Breast epithelium (tissue), 4 donors: ENCODE measurements at regions of chr6 and their contacts with region 1.

Region 1: DNA sequence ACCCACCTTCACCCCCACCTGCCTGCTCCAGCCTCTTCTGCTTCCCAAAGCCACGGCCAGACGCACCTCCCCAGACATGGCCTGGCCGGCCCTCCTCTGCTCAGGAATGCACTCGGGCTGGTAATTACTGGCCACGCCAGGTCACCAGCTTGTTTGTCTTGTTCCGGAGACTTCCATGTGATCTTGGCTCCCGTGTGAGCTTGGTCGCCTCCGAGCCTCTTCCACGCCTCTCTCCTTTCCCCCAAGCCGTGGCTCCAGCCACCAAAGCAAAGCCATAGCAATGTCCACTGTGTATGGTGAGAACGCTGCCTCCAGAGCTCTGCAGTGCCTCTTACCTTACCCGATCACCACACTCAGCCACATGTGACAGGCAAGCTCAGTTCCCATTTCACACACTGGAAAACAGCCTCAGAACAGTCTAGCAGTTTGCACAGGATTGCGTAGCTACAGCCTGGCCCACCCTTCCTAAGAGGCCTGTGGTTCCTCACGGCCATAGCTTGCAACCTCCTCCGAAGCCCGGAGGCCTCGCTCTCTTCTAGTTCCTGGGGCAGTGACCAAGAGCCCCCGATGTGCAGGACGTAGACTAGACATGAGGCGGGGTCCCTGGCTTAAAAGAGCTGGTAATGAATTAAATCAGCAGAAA is 48.1 kb upstream of the AFDN start:
- DNase-seq: peak; percentile 73 to 77
- H3K4me3 ChIP-seq: no peak overlapping the region
- H3K27ac ChIP-seq: peak overlapping the region in 1 of 2 donors; percentile 63
- H3K4me1 ChIP-seq: no peaks in the 10 kb centered on the region
- H3K27me3 ChIP-seq: no peaks in the 10 kb centered on the region
- CTCF ChIP-seq: no peak
- POLR2A ChIP-seq: no peak

Region 2: DNA sequence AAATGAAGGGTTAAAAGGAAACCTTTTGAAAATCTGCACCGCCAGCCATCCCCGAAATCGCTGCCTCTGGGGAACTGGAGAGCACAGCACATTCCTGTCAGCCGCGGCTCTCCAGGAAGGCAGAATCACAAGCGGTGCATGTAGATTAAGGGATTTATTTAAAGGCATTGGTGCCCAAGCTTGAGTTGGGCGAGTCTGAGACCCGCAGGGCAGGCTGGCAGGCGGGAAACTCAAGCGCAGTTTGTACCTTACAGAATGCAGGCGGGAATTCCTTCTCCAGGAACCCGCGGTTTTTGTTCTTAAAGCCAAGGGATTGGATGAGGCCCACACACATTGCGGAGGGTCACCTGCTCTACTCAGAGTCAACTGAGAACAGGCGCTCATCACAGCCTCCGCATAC is 631.6 kb before region 1 on chr6:
- intact Hi-C with region 1: loop called (anchors 5 kb)
- DNase-seq: no peak
- H3K4me3 ChIP-seq: no peak overlapping the region
- H3K27ac ChIP-seq: no peak overlapping the region
- H3K4me1 ChIP-seq: no peaks in the 10 kb centered on the region
- H3K27me3 ChIP-seq: peaks cover 0 to 26% of the 10 kb centered on the region in 2 donors
- CTCF ChIP-seq: no peak
- POLR2A ChIP-seq: no peak

Region 3: GRCh38 chr6:167742719-167743303 is 35.8 kb before region 1 on chr6:
- intact Hi-C with region 1: no loop called
- DNase-seq: no peak
- H3K4me3 ChIP-seq: no peak overlapping the region
- H3K27ac ChIP-seq: no peak overlapping the region
- H3K4me1 ChIP-seq: no peaks in the 10 kb centered on the region
- H3K27me3 ChIP-seq: no peaks in the 10 kb centered on the region
- CTCF ChIP-seq: no peak
- POLR2A ChIP-seq: no peak